ENCODE measurements at regions of chr2 and their contacts with region 1.

Region 1: DNA sequence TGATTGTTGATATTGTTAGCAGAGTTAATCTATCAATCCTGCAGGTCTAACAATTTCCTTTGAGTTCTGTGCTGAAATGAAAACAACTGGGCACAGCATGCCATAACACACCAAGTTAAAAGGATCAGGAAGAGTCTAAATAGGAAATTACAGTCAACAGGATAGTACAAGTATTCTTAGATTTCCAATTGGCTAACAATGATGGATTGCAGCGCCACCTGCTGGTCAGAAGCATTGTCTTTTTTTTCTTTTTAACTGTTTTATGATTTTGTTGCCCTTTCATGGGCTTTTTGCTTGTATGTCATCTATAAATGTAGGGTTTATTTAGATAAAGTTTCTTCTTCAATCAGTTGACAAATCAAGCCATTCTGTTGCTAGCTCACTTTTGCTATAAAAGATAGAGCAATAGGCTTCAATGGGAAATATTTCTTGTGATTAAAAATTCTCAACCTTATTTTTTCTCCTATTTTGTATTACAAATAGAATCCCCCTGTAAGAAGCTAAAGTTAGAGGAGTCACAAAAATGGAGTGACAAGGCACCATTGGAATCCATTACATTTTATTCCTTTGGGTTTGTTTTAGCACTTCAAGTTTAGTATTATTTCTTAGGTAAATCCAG is 40.8 kb upstream of the RPRM start:
- DNase-seq: peak; percentile 58
- H3K4me3 ChIP-seq: no peak overlapping the region
- H3K27ac ChIP-seq: no peak overlapping the region
- H3K4me1 ChIP-seq: no peaks in the 10 kb centered on the region
- H3K27me3 ChIP-seq: no peaks in the 10 kb centered on the region
- CTCF ChIP-seq: peak; percentile 75

Region 2: DNA sequence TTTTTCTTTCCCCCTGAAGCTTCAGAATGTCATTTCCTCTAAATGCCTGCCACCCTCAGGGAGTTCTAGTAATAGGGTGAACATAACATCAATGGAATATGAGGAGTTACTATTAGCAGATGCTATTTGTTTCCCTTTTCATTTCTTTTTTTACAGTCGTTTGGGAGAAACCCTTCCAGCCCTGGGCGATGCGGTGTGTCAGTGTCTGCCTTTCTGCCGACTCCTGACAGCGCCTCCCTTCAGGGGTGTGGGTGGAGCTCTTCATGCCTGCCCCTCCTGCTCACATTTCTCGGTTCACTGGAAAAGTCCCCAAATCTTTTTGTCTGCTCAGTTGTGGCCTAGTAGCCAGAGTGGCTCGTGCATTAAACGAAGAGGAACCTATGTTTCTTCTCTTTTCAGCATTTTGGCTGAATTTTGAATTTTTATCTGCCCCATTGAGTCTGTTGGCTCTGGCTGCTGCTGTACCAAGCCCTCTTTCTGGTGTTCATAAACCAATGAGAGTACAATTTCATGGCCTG is 1112.1 kb before region 1 on chr2:
- intact Hi-C with region 1: no loop called
- DNase-seq: peak; percentile 63
- H3K4me3 ChIP-seq: no peak overlapping the region
- H3K27ac ChIP-seq: no peak overlapping the region
- H3K4me1 ChIP-seq: peaks cover 7% of the 10 kb centered on the region
- H3K27me3 ChIP-seq: no peaks in the 10 kb centered on the region
- CTCF ChIP-seq: no peak

Region 3: DNA sequence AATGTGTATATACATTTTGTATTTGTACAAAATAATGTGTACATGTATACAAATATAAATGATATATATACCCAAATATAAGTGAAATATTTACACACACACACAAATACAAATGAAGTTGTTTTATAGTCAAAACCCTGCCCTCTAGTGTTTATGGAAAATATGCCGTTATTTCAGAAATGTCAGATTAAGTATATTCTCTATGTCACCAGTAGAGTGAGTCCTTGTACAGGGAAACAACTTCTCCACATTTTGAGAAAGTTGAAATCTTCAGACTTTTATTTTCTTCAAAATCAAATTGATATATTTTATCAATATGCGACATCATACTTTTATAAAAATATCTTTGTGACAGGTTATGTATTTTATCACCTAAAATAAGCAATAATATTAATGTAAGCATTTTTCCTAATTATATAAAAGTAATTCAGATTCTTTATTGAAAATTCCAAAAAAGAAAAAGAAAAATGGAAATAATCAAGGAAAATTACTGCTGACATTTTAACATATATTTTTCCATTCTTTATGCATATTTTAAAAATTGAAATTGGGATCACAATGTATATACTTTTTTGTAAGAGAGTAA is 778.5 kb before region 1 on chr2:
- intact Hi-C with region 1: loop called (anchors 10 kb)
- DNase-seq: no peak
- H3K4me3 ChIP-seq: no peak overlapping the region
- H3K27ac ChIP-seq: no peak overlapping the region
- H3K4me1 ChIP-seq: no peaks in the 10 kb centered on the region
- H3K27me3 ChIP-seq: no peaks in the 10 kb centered on the region
- CTCF ChIP-seq: peak; percentile 82

Region 4: DNA sequence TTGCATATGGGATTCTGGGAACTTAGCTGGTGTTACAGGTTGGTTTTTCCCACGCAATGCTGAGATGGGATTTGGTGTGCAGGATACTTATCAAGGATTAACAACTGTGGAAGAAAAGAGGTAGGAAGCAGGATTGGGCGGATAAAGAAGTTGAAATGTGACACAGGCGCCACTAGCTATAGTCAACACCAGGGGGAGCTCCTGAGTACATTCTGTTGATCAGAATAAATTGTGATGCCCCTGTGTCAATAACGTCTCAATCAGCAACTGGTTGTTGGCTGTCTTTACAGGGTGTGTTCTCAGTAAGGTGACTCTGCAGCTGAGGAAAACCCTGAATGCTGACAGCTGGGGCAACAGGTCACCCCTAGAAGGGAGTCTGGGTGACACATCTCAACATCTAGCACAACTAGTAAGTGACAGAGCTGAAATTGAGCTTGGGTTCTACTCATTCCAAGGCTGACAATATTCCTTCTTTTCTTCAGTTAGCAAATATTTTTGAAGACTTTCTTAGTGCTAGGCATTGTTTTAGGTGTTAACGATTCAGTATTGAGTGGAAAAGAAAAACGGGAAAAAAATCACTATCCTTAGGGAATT is 657.9 kb before region 1 on chr2:
- intact Hi-C with region 1: loop called (anchors 10 kb)
- DNase-seq: peak; percentile 28
- H3K4me3 ChIP-seq: no peak overlapping the region
- H3K27ac ChIP-seq: no peak overlapping the region
- H3K4me1 ChIP-seq: no peaks in the 10 kb centered on the region
- H3K27me3 ChIP-seq: no peaks in the 10 kb centered on the region
- CTCF ChIP-seq: peak; percentile 63

Region 5: DNA sequence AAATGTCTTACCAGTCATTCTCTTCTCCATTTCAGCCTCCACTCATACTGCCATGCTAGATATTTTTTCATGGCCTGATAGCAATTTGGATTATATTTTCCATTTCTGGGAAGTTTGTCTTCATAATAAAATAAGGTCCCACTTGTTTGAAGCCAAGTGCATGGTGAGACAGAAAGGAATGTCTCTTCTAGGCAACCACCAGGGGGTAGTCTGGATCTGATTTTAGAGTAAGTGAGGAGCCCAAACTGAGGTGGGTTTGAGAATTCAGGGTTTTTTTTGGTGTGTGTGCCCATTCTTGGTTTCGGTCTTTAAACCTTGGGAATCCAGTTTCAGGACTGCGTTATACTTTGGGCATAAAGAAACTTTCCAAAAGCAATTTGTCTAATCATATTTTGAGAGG is 356.3 kb before region 1 on chr2:
- intact Hi-C with region 1: loop called (anchors 10 kb)
- DNase-seq: no peak
- H3K4me3 ChIP-seq: no peak overlapping the region
- H3K27ac ChIP-seq: no peak overlapping the region
- H3K4me1 ChIP-seq: no peaks in the 10 kb centered on the region
- H3K27me3 ChIP-seq: no peaks in the 10 kb centered on the region
- CTCF ChIP-seq: peak; percentile 26

Region 6: DNA sequence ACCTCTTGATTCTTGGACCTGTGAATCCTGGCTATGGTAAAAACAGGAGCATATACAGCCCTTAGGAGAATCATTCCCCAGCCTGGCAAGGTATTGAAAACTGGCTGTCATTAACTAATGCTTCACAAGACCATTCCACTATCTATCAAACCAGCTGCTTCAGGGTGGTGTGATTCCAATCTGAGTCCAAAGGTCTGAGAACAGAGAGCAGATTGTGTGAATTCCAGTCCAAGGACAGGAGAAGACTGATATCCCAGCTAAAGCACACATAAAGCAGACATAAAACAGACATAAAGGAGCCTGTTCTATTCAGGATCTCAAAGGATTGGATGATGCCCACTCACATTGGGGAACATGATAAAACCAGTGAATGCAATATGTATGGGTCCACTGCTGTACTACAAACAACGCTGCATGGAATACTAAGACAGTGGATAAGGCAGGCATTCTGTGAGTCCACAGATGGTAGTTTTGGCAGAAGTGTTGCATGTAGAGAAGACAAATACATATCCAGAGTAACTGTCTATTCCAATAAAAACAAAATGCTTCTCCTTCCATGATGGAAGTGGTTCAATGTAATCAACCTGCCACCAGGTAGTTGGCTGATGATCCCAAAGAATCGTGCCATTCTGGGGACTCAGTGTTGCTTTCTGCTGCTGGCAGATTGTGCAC is 1543.0 kb after region 1 on chr2:
- intact Hi-C with region 1: no loop called
- DNase-seq: no peak
- H3K4me3 ChIP-seq: no peak overlapping the region
- H3K27ac ChIP-seq: no peak overlapping the region
- H3K4me1 ChIP-seq: no peaks in the 10 kb centered on the region
- H3K27me3 ChIP-seq: no peaks in the 10 kb centered on the region
- CTCF ChIP-seq: no peak

Measured in colonic mucosa (tissue), 4 donors.